Activated T-helper 1 cell treated with anti-CD3 and anti-CD28 coated beads, Interleukin-12 subunit alpha, Interleukin-12 subunit beta, Interleukin-2, Interleukin-4 antibody, amounts not matched to agents 30 ng/mL and 10 ng/mL and 1 ng/mL, durations not matched to agents 14 hours and 24 hours and 36 hours (primary cell): ENCODE measurements at regions of chr11 and their contacts with region 1.

Region 1: GRCh38 chr11:63986156-63986931 is at the start of gene OTUB1:
- DNase-seq: peak; percentile 86
- H3K4me3 Mint-ChIP-seq: peak within 1 kb of the TSS; percentile 97
- H3K27ac Mint-ChIP-seq: peak within 1 kb of the TSS; percentile 96
- H3K4me1 Mint-ChIP-seq: peaks cover 32% of the 10 kb centered on the region
- H3K27me3 Mint-ChIP-seq: no peaks in the 10 kb centered on the region
- total RNA-seq, gene OTUB1: 104 and 114 TPM in 2 replicates

Region 2: GRCh38 chr11:64165849-64166635 is 179.7 kb after region 1 on chr11 and contains the start of gene MACROD1:
- intact Hi-C with region 1: loop called (anchors 2 kb)
- DNase-seq: peak; percentile 78
- H3K4me3 Mint-ChIP-seq: peak within 1 kb of the TSS; percentile 93
- H3K27ac Mint-ChIP-seq: peak within 1 kb of the TSS; percentile 86
- H3K4me1 Mint-ChIP-seq: peaks cover 8% of the 10 kb centered on the region
- H3K27me3 Mint-ChIP-seq: peaks cover 2% of the 10 kb centered on the region
- total RNA-seq, gene MACROD1: 17.4 and 20.2 TPM in 2 replicates